HCT116 (cell line): ENCODE measurements at regions of chr15 and their contacts with region 1.

Region 1: DNA sequence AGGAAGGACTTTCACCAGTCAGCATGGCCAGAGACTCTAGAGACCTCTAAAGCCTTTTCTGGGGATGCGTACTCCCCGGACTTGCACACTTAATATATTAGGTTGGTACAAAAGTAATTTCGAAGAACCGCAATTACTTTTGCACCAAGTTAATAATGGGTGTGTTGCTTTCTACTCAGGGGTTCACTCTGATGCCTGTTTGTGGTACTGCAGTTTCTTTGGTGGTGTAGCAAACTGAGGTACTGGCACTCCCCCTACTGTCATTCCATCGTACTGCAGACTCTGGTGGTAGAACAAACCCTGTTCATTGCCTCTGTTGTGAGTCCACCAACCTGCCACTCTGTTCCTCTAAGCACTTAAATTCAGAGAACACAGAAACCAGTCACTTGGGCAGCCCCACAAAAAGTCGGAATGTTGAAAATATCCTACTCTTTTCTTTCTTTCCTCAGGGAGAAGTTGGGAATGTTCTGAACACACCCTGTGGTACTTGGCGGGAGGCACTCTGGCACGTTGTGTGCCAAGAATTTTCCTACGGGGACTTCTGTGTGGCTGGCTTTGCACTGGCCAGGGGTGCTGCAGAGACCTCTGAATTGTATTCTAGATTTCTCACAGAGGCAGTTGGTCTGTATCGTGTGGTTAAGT is 46.3 kb downstream of the GABRG3 start:
- DNase-seq: no peak
- ATAC-seq: no peak; the same call in 1 of the 2 replicates
- H3K4me3 ChIP-seq: no peak overlapping the region
- H3K27ac ChIP-seq: no peak overlapping the region
- H3K4me1 ChIP-seq: no peaks in the 10 kb centered on the region
- H3K27me3 ChIP-seq: no peaks in the 10 kb centered on the region
- CTCF ChIP-seq: peak; percentile 14 to 63 (median 63); a peak in 4 of 6 replicates
- POLR2A ChIP-seq: no peak
- RAD21 ChIP-seq: 0 out of 2 replicates have a peak, but pooled peaks have one; percentile 13

Region 2: DNA sequence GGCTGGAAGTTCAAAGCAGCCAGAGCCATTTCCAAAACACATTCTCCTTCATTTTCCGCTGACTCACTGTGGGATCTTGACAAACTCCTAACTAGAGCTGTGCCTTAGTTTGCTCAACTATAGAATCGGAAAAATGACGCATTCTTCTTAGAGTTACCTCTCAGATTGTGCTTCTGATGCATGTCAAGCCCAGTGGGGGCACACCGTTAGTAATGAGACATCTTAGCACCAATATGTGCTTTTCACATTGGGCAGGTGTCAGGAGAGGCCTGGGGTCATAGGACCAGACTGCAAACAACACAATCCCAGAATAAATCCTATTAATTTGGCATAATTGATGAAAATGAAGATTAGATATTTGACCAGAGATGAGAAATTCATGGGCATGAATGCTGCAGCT is 1507.1 kb before region 1 on chr15:
- CTCF ChIA-PET with region 1: no interaction called
- POLR2A ChIA-PET with region 1: no interaction called
- RAD21 ChIA-PET with region 1: no interaction called
- intact Hi-C with region 1: loop called (anchors 5 kb)
- DNase-seq: no peak
- ATAC-seq: no peak
- H3K4me3 ChIP-seq: no peak overlapping the region
- H3K27ac ChIP-seq: no peak overlapping the region
- H3K4me1 ChIP-seq: no peaks in the 10 kb centered on the region
- H3K27me3 ChIP-seq: no peaks in the 10 kb centered on the region
- CTCF ChIP-seq: no peak
- POLR2A ChIP-seq: no peak
- RAD21 ChIP-seq: no peak

Region 3: DNA sequence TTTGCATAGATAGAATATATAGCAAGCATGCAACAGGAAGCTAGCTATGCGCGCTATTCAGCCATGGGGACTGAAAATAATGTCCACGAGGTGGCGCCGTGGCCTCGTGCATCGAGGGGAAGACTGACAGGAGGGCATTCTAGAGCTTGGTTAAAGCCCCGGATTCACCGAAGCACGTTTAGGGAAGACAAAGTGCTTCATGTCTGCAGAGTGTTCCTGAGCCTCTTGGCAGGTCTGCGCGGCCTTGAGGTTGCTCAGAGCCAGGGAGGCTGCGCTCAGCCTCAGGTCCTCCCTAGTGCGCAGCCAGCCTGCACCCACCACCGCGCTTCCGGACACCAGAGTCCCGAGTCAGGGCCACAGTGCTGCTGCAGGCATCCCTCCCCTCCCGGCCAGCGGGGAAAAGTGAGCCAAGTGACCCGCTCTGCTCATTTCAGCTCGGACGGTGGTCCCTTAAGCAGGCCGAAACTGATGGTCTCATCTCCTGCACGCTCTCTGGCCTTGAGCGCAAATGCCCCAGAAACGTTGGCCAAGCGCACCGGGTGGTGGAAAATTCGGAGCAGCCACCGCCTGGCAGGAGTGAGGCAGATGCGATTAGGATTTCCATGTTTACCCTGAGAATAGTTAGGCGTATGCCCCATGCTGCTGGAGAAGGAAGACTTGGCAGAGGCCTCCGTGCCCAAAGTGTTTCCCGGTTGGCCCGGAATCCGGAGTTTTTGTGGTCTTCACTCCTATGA is 125.7 kb before region 1 on chr15:
- CTCF ChIA-PET with region 1: no interaction called
- POLR2A ChIA-PET with region 1: no interaction called
- RAD21 ChIA-PET with region 1: no interaction called
- intact Hi-C with region 1: loop called (anchors 5 kb)
- DNase-seq: no peak
- ATAC-seq: no peak
- H3K4me3 ChIP-seq: no peak overlapping the region
- H3K27ac ChIP-seq: no peak overlapping the region
- H3K4me1 ChIP-seq: no peaks in the 10 kb centered on the region
- H3K27me3 ChIP-seq: no peaks in the 10 kb centered on the region
- CTCF ChIP-seq: peak in 2 of 3 experiments; percentile 20 to 36; a peak in 1 of 6 replicates
- POLR2A ChIP-seq: no peak
- RAD21 ChIP-seq: peak; percentile 24; the same call in 1 of the 2 replicates

Region 4: GRCh38 chr15:27070841-27071240 is 53.6 kb after region 1 on chr15:
- CTCF ChIA-PET with region 1: no interaction called
- POLR2A ChIA-PET with region 1: no interaction called
- RAD21 ChIA-PET with region 1: no interaction called
- intact Hi-C with region 1: no loop called
- DNase-seq: no peak
- ATAC-seq: no peak
- H3K4me3 ChIP-seq: no peak overlapping the region
- H3K27ac ChIP-seq: no peak overlapping the region
- H3K4me1 ChIP-seq: no peaks in the 10 kb centered on the region
- H3K27me3 ChIP-seq: no peaks in the 10 kb centered on the region
- CTCF ChIP-seq: no peak
- POLR2A ChIP-seq: no peak
- RAD21 ChIP-seq: no peak

Region 5: DNA sequence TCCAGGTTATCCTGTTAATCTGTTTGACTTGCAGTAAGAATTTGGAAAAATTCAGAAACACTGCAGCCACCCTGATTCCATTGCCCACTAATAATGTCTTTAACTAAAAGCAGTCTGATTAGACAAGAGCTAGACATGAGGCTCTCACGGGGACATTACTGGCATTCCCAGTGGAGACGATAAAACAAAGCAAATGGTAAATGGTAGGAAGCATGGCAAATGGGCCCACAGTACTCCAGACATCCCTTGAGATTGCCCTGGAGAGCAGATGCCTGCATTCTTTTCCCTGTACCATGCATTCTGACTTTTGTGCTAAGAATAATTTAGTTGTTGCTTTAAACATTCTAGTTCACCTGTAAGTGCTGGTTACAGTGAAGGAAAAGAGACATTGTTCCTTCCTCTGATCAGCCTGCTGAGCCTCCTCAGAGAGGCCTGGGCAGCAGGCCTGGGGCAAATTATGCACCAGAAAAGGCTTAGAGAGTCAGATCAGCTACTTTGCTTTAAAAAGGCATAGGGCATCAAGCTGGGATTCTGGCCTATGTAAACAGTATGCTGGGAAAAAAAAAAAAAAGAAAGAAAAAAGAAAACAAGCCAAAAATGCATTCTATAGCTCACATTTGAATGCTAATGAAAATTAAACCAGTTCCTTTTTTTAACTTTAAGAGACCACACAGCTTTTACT is 158.3 kb after region 1 on chr15:
- CTCF ChIA-PET with region 1: no interaction called
- POLR2A ChIA-PET with region 1: no interaction called
- RAD21 ChIA-PET with region 1: no interaction called
- intact Hi-C with region 1: no loop called
- DNase-seq: no peak
- ATAC-seq: no peak
- H3K4me3 ChIP-seq: no peak overlapping the region
- H3K27ac ChIP-seq: no peak overlapping the region
- H3K4me1 ChIP-seq: no peaks in the 10 kb centered on the region
- H3K27me3 ChIP-seq: no peaks in the 10 kb centered on the region
- CTCF ChIP-seq: no peak
- POLR2A ChIP-seq: no peak
- RAD21 ChIP-seq: no peak